Right ventricle myocardium inferior (tissue), 1 donor: ENCODE measurements at regions of chr22 and their contacts with region 1.

Region 1: DNA sequence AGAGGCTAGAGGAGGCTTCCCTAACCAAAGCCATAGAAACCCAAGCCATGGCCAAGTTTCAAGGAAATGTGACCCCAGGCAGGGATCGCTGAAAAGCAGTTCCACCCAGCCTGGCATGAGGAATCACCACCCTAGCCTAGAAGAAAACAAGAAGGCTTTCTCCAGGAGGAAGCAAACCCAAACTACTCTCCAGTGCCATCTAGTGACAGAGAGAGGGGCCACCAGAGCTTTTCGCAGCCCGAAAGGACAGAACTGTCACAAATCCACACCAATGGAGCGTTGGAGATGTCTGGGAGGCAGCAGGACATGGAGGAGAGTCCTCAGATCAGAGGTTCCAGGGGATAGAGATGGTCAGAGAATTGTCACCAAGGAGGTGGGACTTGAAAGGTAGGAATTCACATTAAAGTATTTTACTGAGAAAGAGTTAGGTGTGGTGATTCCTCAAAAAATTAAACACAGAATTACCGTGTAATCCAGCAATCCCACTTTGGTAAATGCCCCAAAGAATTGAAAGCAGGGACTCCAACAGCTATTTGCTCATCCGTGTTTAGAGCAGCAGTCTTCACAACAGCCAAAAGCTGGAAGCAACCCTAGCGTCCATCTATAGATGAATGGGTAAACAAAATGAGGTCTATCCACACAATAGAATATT is 67.3 kb upstream of the NUP50 start:
- DNase-seq: no peak
- ATAC-seq: peak; percentile 56

Region 2: DNA sequence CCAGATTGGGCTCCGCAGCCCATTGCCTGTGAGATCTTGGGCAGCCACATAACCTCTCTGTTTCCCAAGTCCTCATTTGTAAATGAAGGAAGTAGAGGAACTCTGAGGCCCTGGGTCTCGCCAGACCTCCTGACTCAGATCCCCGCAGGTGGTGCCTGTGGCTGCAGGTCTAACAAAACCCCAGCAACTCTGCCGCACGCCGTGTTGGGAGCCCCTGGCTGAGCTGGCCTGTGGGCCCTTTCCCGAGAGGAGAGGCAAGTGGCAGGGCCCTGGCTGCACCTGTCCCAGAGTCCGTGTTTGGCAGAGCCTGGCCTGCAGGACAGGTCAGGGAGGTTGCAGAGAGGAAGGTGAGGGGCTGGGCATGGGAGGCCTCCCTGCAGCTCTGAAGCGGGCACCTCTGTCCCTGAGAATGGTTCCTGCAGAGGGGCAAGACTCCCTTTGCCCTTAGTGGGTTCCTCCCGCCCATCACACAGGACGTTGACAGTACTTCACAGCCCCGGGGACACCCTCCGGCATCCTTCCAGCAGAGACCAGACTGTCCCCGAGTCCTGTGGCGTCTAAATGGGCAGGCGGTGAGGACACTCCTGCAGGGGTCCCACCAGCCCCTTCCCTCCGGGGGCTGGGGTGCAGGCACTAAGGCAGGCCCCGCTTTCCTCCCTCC is 276.3 kb before region 1 on chr22:
- intact Hi-C with region 1: loop called (anchors 1 kb)
- DNase-seq: no peak
- ATAC-seq: no peak

Region 3: GRCh38 chr22:44889258-44889878 is 207.0 kb before region 1 on chr22:
- intact Hi-C with region 1: loop called (anchors 2 kb)
- DNase-seq: no peak
- ATAC-seq: peak; percentile 63